HCT116 (cell line): ENCODE measurements at regions of chr17 and their contacts with region 1.

Region 1: DNA sequence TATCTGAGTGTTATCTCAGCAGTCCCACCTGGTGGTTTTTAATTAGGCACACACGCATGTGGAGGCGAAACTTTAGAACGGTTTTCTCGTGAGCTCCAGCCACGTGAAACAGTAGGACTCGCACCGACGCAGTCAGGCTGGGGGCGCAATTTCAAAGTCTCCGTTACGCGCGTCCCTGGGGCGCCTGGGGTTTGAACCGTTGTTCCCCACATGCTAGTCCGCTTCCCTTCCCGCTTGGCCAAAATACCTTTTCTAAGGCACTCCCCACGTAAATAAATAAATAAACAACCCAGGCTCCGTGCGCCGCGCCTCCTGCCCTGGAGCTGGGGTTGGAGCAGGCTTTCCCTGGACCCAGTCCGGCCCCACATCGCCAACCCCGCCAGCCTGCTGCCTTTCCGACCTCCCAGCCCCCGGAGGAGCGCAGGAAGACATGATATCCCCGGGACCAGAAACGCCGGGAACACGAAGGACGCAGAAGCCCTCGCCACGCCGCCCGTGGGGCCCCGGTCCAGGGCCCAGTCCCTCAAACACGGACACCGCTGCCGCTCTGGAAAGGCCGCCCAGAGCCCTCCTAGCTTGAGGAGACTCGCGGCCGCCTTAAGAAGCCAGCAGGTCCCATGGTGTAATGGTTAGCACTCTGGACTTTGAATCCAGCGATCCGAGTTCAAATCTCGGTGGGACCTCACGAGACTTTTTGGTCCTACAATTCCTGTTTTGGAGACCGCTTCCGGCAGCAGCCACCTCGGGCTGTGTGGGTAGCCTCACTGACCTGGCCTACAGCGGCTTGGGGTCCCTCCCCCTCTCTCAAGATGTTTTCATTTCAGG is 18.2 kb downstream of the GNGT2 start:
- DNase-seq: peak; percentile 89
- ATAC-seq: peak; percentile 75
- H3K4me3 ChIP-seq: peak overlapping the region; percentile 54 to 61
- H3K27ac ChIP-seq: peak overlapping the region; percentile 85
- H3K4me1 ChIP-seq: peaks cover 13 to 44% of the 10 kb centered on the region in 2 experiments; a peak in 3 of 4 replicates
- H3K27me3 ChIP-seq: no peaks in the 10 kb centered on the region
- CTCF ChIP-seq: peak; percentile 24 to 32 (median 29); a peak in 5 of 6 replicates
- POLR2A ChIP-seq: no peak
- RAD21 ChIP-seq: no peak; the same call in 1 of the 2 replicates

Region 2: DNA sequence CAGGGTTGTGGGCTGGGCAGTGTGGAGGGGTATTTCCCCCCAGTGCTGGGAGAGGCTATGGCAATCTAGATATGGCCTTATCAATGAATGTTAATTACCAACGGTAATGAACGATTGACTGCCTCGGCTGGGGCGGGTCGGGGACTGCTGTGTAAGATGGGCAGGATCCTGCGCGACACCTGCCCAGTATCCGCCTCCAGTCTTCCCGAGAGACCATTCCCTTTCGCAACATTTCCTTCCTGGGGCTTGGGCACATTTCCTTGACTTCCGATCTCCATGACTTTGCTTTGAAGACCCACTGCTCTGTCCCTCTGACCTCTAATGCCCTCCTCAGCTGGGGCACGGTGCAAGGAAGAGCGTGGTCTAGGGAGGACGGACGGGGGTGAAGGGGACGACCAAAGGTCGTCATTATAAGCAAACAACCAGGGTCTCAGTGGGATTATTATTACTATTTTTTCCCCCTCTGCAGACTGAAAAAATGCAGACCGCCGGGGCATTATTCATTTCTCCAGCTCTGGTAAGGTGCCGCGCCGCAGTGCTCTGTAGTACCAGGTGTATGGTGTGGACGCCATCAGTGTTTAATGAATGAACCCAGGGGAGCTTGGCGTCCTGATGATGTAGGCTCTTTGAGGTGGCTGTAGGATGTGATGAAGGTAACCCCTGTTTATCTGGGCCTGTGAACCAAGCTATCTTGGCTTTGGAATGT is 299.0 kb before region 1 on chr17:
- CTCF ChIA-PET with region 1: no interaction called
- POLR2A ChIA-PET with region 1: no interaction called
- RAD21 ChIA-PET with region 1: no interaction called
- intact Hi-C with region 1: loop called (anchors 5 kb)
- DNase-seq: no peak
- ATAC-seq: no peak
- H3K4me3 ChIP-seq: peak overlapping the region; percentile 82 to 88
- H3K27ac ChIP-seq: peak overlapping the region; percentile 73
- H3K4me1 ChIP-seq: peaks cover 11 to 26% of the 10 kb centered on the region in 2 experiments; a peak in 3 of 4 replicates
- H3K27me3 ChIP-seq: no peaks in the 10 kb centered on the region
- CTCF ChIP-seq: no peak
- POLR2A ChIP-seq: no peak
- RAD21 ChIP-seq: no peak

Region 3: DNA sequence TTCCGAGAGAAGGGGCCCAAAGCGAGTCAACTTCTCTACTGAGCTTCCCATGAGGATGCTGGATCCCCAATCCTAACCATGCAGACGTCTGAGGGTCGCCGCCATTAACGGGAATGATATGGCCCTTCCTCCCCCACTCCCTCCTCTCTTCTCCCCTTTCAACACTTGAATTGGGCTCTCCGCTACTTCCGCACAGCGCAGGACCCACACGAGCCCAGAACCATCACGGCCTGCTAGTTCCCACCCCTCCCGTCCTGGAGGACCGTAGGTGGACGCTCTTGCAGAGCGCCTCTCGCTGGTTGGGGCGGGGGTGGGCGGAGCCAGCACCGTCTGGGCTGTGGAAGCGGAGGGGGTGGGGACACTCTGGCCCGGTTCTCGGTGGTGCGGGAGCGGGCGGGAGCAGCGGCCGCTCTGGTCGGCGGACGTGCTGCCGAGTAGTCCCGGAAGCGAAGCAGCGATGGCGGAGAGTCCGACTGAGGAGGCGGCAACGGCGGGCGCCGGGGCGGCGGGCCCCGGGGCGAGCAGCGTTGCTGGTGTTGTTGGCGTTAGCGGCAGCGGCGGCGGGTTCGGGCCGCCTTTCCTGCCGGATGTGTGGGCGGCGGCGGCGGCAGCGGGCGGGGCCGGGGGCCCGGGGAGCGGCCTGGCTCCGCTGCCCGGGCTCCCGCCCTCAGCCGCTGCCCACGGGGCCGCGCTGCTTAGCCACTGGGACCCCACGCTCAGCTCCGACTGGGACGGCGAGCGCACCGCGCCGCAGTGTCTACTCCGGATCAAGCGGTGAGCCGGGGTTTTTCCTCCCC is 283.9 kb before region 1 on chr17 and contains the start of gene UBE2Z:
- CTCF ChIA-PET with region 1: interaction called, 3 read pairs
- POLR2A ChIA-PET with region 1: no interaction called
- RAD21 ChIA-PET with region 1: no interaction called
- intact Hi-C with region 1: loop called (anchors 5 kb)
- DNase-seq: peak; percentile 94
- ATAC-seq: peak; percentile 92
- H3K4me3 ChIP-seq: peak within 1 kb of the TSS; percentile 70 to 84
- H3K27ac ChIP-seq: peak within 1 kb of the TSS; percentile 92
- H3K4me1 ChIP-seq: peaks cover 18 to 26% of the 10 kb centered on the region in 2 experiments
- H3K27me3 ChIP-seq: no peaks in the 10 kb centered on the region
- CTCF ChIP-seq: 0 out of 6 replicates have a peak, but pooled peaks of 1 of the 3 experiments have one; percentile 9
- POLR2A ChIP-seq: peak; percentile 94
- RAD21 ChIP-seq: no peak
- total RNA-seq, gene UBE2Z: 119 TPM

Region 4: DNA sequence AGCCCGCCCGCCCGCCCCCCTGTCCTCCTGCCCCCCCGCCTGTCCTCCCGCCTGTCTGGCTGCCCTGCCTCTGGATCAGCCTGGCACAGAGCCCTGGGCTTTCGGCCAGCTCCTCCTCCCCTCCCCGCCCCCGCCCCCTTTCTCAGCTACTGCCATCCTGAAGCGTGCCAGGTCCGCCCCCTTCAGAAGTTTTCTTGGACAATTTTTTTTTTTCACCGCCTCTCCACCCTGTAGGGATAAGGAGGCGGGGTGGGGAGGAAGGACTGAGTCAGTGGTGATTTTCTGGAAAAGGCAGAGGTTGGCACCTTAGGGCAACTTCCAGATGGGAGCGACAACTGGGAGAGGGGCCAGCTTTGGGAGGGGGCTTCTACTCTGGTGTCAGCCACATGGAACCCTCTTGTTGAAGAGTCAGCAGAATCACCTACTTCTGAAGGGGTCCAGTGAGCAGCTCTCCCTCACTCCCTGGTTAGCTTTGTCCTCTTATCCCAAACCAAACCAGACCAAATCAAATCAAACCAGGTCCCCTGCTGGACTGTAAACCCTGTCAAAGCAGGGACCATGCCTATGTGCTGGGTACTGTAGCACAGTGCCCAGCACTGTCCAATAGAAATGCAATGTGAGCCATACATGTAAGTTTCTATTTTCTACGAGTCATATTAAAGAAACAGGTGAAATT is 175.2 kb before region 1 on chr17:
- CTCF ChIA-PET with region 1: no interaction called
- POLR2A ChIA-PET with region 1: no interaction called
- RAD21 ChIA-PET with region 1: no interaction called
- intact Hi-C with region 1: no loop called
- DNase-seq: peak; percentile 76
- ATAC-seq: peak; percentile 68
- H3K4me3 ChIP-seq: peak overlapping the region; percentile 3 to 30; a peak in 3 of 4 replicates
- H3K27ac ChIP-seq: peak overlapping the region; percentile 0; the same call in 1 of the 2 replicates
- H3K4me1 ChIP-seq: peaks cover 13 to 29% of the 10 kb centered on the region in 2 experiments
- H3K27me3 ChIP-seq: no peaks in the 10 kb centered on the region; the same call in 1 of the 2 replicates
- CTCF ChIP-seq: no peak
- POLR2A ChIP-seq: no peak
- RAD21 ChIP-seq: no peak

Region 5: GRCh38 chr17:49117587-49118230 is 74.4 kb before region 1 on chr17:
- CTCF ChIA-PET with region 1: no interaction called
- POLR2A ChIA-PET with region 1: no interaction called
- RAD21 ChIA-PET with region 1: no interaction called
- intact Hi-C with region 1: no loop called
- DNase-seq: no peak
- ATAC-seq: no peak
- H3K4me3 ChIP-seq: no peak overlapping the region
- H3K27ac ChIP-seq: no peak overlapping the region
- H3K4me1 ChIP-seq: no peaks in the 10 kb centered on the region
- H3K27me3 ChIP-seq: no peaks in the 10 kb centered on the region
- CTCF ChIP-seq: no peak
- POLR2A ChIP-seq: no peak
- RAD21 ChIP-seq: no peak

Region 6: GRCh38 chr17:49180303-49180702 is 11.8 kb before region 1 on chr17:
- CTCF ChIA-PET with region 1: interaction called, 26 read pairs
- POLR2A ChIA-PET with region 1: interaction called, 5 read pairs
- RAD21 ChIA-PET with region 1: interaction called, 3 read pairs
- intact Hi-C with region 1: no loop called
- DNase-seq: peak; percentile 74
- ATAC-seq: peak; percentile 96
- H3K4me3 ChIP-seq: no peak overlapping the region
- H3K27ac ChIP-seq: no peak overlapping the region
- H3K4me1 ChIP-seq: peaks cover 0 to 6% of the 10 kb centered on the region in 2 experiments; a peak in 1 of 4 replicates
- H3K27me3 ChIP-seq: no peaks in the 10 kb centered on the region
- CTCF ChIP-seq: peak; percentile 87 to 99 (median 97)
- POLR2A ChIP-seq: no peak
- RAD21 ChIP-seq: peak; percentile 86